Activated CD4-positive, alpha-beta T cell treated with anti-CD3 and anti-CD28 coated beads, Interleukin-2, amount 10 ng/mL, durations not matched to agents 24 days and 14 days (primary cell): ENCODE measurements at regions of chr1 and their contacts with region 1.

Region 1: DNA sequence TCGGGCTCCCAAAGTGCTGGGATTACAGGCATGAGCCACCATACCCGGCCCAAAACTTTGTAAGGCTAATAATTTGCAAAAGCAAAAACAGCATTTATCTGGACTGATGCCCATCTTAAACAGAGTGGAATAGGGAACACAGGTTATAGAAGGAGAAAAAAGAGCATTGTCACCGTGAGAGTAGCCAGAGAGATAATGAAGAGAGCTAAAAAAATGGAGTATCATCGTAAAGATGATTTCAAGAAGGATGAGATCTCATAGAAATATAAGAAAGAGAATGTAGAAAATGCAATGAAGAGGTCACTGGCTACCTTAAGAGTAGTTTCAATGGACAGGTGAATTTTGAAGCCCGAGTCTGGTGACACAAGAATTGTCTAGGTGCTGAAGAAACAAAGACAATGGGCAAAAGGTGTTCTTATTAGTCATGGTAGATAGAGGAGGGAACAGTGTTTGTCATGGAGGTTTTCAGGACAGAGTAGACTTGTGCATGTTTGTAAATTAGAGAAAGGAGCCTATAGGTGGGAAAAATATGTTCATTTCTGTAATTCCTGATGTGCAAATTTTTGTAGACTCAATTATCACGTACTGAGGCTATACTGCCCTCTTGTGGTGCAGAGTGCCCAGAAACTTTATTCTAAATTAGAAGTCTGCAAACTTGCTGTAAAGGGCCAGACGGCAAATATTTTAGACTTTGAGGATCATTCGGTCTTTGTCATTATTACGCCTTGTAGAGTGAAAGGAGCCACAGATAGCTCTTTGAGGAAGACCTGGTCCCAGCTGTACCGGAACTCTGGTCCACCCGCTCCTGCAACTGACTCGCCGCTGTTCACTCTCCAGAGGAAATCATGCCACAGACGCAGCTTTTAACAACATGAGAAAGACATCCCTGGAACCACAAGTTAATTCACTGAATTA is 8.1 kb upstream of the TMEM183A start:
- DNase-seq: peak; percentile 90
- H3K4me3 Mint-ChIP-seq: peak overlapping the region; percentile 62
- H3K27ac Mint-ChIP-seq: no peak overlapping the region
- H3K4me1 Mint-ChIP-seq: peaks cover 17% of the 10 kb centered on the region
- H3K27me3 Mint-ChIP-seq: peaks cover 30% of the 10 kb centered on the region

Region 2: GRCh38 chr1:202888531-202889360 is 110.3 kb before region 1 on chr1 and contains the start of gene RABIF:
- intact Hi-C with region 1: loop called (anchors 5 kb)
- DNase-seq: peak; percentile 99
- H3K4me3 Mint-ChIP-seq: peak within 1 kb of the TSS; percentile 93
- H3K27ac Mint-ChIP-seq: peak within 1 kb of the TSS; percentile 98
- H3K4me1 Mint-ChIP-seq: peaks cover 20% of the 10 kb centered on the region
- H3K27me3 Mint-ChIP-seq: peaks cover 2% of the 10 kb centered on the region
- total RNA-seq, gene RABIF: 11.8 and 12.7 TPM in 2 replicates